ENCODE measurements at regions of chr7 and their contacts with region 1.

Region 1: GRCh38 chr7:43735802-43736541 is 6.6 kb upstream of the COA1 start:
- DNase-seq: no peak
- H3K4me3 ChIP-seq: no peak overlapping the region
- H3K27ac ChIP-seq: no peak overlapping the region
- H3K4me1 ChIP-seq: no peaks in the 10 kb centered on the region
- H3K27me3 ChIP-seq: no peaks in the 10 kb centered on the region
- CTCF ChIP-seq: no peak

Region 2: DNA sequence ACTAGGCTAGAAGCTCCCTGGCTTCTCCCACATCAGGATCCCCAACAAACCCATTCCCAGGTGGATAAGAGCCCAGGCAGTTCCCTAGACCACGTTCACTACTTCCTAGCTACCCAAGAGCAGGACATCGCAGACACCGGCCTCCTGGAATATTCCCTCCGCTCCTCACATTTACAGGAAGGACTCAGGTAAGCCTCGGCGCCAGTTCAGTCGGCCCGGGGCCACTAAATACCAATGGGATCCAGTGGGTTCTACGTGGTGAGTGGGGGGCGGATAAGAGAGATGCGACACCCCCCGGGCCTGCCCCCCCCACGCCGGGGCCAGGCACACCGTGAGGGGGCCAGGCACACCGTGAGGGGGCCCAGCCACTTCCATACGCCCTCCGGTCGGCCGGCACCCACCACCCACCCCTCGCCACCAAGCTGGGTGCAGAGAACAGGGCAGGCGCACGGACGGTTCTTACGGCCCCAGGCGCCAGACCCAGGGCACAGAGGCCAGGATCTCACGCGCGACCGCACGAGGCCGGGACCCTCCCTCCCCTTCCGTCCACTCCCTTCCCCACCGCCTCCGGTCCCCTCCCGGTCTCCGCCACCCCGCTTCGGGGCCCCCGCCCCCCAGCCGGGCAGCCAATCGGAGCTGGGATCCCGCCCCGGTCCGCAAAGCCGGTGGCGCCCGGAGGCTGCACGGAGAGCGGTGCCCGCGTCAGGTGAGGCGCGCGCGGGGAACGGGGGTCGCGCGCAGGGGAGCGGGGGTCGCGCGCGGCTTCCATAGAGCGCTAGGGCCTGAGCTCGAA is 22.3 kb after region 1 on chr7 and contains the start of gene BLVRA:
- CTCF ChIA-PET with region 1: no interaction called
- dilution Hi-C with region 1: no loop called
- in situ Hi-C with region 1: no loop called
- intact Hi-C with region 1: loop called (anchors 2 kb)
- DNase-seq: peak; percentile 35
- H3K4me3 ChIP-seq: peak within 1 kb of the TSS; percentile 75 to 89 (median 76)
- H3K27ac ChIP-seq: peak within 1 kb of the TSS; percentile 48
- H3K4me1 ChIP-seq: peaks cover 19% of the 10 kb centered on the region
- H3K27me3 ChIP-seq: no peaks in the 10 kb centered on the region
- CTCF ChIP-seq: no peak
- total RNA-seq, gene BLVRA: 24.7 to 37.3 TPM

Region 3: GRCh38 chr7:43808135-43808809 is 72.3 kb after region 1 on chr7:
- CTCF ChIA-PET with region 1: interaction called, 5 read pairs
- dilution Hi-C with region 1: loop called (anchors 5 kb)
- in situ Hi-C with region 1: no loop called
- intact Hi-C with region 1: no loop called
- DNase-seq: no peak
- H3K4me3 ChIP-seq: no peak overlapping the region
- H3K27ac ChIP-seq: no peak overlapping the region
- H3K4me1 ChIP-seq: no peaks in the 10 kb centered on the region
- H3K27me3 ChIP-seq: no peaks in the 10 kb centered on the region
- CTCF ChIP-seq: no peak